Heart left ventricle (tissue), 16 donors: ENCODE measurements at regions of chr19 and their contacts with region 1.

Region 1: DNA sequence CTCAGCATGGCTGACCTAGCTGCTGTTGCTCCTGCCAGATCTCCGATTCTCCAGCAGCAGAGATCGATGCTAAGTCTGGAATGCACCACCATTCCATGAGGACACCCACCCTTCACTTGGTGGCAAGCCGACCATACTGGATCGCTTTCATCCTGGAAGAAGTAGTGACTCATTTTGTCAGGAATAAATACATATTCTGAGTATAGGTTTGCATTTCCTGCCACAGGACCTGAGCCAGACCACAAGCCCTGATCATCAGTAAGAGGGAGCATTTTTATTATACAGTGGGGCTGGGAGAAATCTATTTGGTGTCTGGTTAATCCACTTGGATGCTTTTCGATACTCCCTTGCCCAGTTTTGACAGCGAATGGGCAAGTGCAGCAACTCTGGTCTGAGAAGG is 10.9 kb upstream of the KCTD15 start:
- DNase-seq: no peak
- ATAC-seq: no peak
- H3K4me3 ChIP-seq: no peak overlapping the region
- H3K27ac ChIP-seq: no peak overlapping the region
- H3K4me1 ChIP-seq: peaks cover 0 to 2% (median 0%) of the 10 kb centered on the region in 12 donors
- H3K27me3 ChIP-seq: peaks cover 0 to 14% (median under 1%) of the 10 kb centered on the region in 9 donors
- CTCF ChIP-seq: no peak
- POLR2A ChIP-seq: no peak

Region 2: GRCh38 chr19:33883859-33884519 is 98.2 kb after region 1 on chr19:
- intact Hi-C with region 1: loop called in 1 of 10 experiments (anchors 10 kb)
- DNase-seq: peak in 4 of 5 donors; percentile 45 to 66 (median 46)
- ATAC-seq: peak in 3 of 4 donors; percentile 74 to 83 (median 80)
- H3K4me3 ChIP-seq: peak overlapping the region in 6 of 12 donors; percentile 2 to 25 (median 20)
- H3K27ac ChIP-seq: peak overlapping the region in 11 of 12 donors; percentile 53 to 85 (median 67)
- H3K4me1 ChIP-seq: peaks cover 0 to 36% (median 19%) of the 10 kb centered on the region in 12 donors
- H3K27me3 ChIP-seq: no peaks in the 10 kb centered on the region
- CTCF ChIP-seq: no peak
- POLR2A ChIP-seq: no peak

Region 3: GRCh38 chr19:33914599-33914998 is 128.8 kb after region 1 on chr19:
- intact Hi-C with region 1: loop called in 4 of 10 experiments (anchors 5 to 10 kb)
- DNase-seq: no peak
- ATAC-seq: no peak
- H3K4me3 ChIP-seq: no peak overlapping the region
- H3K27ac ChIP-seq: no peak overlapping the region
- H3K4me1 ChIP-seq: no peaks in the 10 kb centered on the region
- H3K27me3 ChIP-seq: peaks cover 0 to 13% (median 0%) of the 10 kb centered on the region in 9 donors
- CTCF ChIP-seq: no peak
- POLR2A ChIP-seq: no peak